Heart right ventricle (tissue), 16 donors: ENCODE measurements at regions of chr6 and their contacts with region 1.

Region 1: GRCh38 chr6:3281631-3282475 is 23.1 kb downstream of the PSMG4 start:
- DNase-seq: peak in 1 of 2 donors; percentile 29
- ATAC-seq: peak in 6 of 8 donors; percentile 17 to 50 (median 38)
- H3K4me3 ChIP-seq: no peak overlapping the region
- H3K27ac ChIP-seq: peak overlapping the region in 8 of 10 donors; percentile 6 to 68 (median 45)
- H3K4me1 ChIP-seq: peaks cover 7 to 31% (median 21%) of the 10 kb centered on the region in 9 donors
- H3K27me3 ChIP-seq: no peaks in the 10 kb centered on the region
- CTCF ChIP-seq: no peak

Region 2: DNA sequence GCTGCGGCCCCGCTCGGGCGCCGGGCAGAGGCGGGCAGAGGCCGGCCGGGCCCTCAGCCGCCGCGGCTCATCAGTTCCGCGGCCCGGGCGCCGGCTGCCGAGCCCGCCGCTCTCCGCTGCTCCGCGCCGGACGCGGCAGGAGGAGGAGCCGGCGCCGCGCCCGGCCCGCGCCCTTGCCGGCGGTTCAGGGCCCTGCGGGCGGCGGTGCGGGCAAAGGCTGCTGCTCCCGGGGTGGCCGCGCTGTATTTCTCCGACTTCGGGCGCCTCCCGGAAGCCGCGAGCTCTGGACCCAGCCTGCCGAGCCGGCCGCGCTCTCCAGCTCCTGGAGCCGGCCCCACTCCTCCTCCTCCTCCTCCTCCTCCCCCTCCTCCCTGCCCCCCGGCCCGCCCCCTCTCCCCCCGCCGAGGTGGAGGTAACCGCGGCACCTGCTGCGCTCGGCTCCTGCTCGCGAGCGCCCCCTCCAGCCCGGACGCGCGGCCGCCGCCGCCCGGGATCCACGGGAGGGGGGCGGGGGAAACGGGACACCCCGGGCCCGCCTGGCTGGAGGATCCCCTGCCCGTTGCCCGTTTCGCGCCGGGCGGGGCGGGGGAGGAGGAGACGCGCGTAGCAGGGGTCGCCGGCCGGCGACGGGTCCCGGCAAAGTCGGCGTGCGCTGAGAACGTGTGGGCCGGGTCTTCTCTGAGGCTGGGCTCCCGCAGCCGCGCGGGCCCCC is 175.1 kb after region 1 on chr6 and contains the start of gene SLC22A23:
- intact Hi-C with region 1: loop called in 6 of 10 experiments (anchors 5 to 10 kb)
- DNase-seq: peak; percentile 53 to 76
- ATAC-seq: peak; percentile 77 to 90 (median 80)
- H3K4me3 ChIP-seq: peak within 1 kb of the TSS; percentile 23 to 72 (median 68)
- H3K27ac ChIP-seq: peak within 1 kb of the TSS; percentile 25 to 67 (median 49)
- H3K4me1 ChIP-seq: peaks cover 11 to 43% (median 25%) of the 10 kb centered on the region in 9 donors
- H3K27me3 ChIP-seq: peaks cover 0 to 87% (median 14%) of the 10 kb centered on the region in 7 donors
- CTCF ChIP-seq: peak; percentile 62 to 81 (median 77)
- total RNA-seq, gene SLC22A23: 4.4 to 7.8 (median 5.5) TPM

Region 3: DNA sequence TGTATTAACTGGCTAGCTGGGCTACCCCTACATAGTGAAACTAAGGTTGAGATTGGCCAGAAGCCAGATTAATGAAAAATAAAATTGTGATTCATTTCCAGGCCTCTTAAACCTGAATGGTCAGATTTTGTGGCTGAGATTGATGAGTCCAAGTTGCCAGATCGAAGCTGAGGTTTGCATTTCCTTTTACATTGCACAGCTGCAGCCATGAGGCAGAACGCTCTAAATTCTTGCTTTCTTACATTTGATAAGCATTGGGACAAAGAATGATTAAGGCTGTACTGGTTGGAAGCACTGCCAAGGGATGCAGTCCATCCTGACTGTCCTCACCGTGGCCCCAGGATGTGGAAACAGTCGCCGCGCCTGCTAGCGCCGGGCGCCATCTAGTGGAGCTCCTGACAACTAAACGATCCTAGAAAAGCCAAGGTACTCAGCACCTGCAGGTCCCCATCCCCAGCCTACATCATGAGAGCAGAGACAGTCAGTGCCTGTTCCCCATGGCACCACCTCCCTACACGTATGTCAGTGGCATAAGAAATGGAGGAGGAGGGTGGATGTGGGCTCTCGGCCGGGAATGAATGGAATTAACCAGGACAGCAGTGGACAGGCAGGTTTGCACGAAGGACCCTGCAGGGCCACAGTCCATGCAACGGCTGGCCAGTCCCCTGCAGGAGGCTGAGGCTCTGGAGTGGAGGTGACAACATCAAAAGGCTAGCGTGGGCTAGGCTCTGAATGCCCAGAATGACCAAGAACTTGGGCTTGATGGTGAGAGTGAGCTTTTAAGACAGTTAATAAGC is 450.7 kb after region 1 on chr6:
- intact Hi-C with region 1: loop called (anchors 1 to 5 kb)
- DNase-seq: peak; percentile 67 to 72
- ATAC-seq: peak; percentile 65 to 84 (median 73)
- H3K4me3 ChIP-seq: no peak overlapping the region
- H3K27ac ChIP-seq: peak overlapping the region in 1 of 10 donors; percentile 6
- H3K4me1 ChIP-seq: peaks cover 0 to 33% (median 13%) of the 10 kb centered on the region in 9 donors
- H3K27me3 ChIP-seq: no peaks in the 10 kb centered on the region
- CTCF ChIP-seq: peak; percentile 76 to 94 (median 87)

Region 4: DNA sequence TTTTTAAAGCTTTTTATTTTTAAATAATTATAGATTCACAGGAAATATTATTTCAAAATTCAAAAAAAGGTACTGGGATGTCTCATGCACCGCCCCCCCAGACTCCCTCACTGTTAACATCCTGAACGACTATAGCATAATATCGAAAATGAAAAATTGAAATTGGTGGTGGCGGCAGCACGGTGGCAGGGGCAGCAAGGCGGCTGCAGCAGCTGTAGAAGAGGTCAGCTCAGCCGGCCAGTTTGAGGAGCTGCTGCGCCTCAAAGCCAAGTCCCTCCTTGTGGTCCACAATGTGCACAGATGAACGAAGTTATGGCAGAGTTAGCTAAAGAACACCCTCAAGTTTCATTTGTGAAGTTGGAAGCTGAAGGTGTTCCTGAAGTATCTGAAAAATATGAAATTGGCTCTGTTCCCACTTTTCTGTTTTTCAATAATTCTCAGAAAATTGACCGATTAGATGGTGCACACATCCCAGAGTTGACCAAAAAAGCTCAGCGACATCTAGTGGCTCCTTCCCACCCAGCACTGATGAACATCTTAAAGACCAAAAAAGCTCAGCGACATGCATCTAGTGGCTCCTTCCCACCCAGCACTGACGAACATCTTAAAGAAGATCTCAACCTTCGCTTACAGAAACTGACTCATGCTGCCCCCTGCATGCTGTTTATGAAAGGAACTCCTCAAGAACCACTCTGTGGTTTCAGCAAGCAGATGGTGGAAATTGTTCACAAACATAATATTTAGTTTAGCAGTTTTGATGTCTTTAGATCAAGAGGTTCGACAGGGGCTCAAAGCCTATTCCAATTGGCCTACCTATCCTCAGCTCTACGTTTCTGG is 696.2 kb after region 1 on chr6:
- intact Hi-C with region 1: loop called in 3 of 10 experiments (anchors 10 kb)
- DNase-seq: peak in 1 of 2 donors; percentile 24
- ATAC-seq: peak; percentile 75 to 92 (median 86)
- H3K4me3 ChIP-seq: no peak overlapping the region
- H3K27ac ChIP-seq: no peak overlapping the region
- H3K4me1 ChIP-seq: peaks cover 0 to 5% (median 0%) of the 10 kb centered on the region in 9 donors
- H3K27me3 ChIP-seq: no peaks in the 10 kb centered on the region
- CTCF ChIP-seq: peak; percentile 22 to 73 (median 64)

Region 5: DNA sequence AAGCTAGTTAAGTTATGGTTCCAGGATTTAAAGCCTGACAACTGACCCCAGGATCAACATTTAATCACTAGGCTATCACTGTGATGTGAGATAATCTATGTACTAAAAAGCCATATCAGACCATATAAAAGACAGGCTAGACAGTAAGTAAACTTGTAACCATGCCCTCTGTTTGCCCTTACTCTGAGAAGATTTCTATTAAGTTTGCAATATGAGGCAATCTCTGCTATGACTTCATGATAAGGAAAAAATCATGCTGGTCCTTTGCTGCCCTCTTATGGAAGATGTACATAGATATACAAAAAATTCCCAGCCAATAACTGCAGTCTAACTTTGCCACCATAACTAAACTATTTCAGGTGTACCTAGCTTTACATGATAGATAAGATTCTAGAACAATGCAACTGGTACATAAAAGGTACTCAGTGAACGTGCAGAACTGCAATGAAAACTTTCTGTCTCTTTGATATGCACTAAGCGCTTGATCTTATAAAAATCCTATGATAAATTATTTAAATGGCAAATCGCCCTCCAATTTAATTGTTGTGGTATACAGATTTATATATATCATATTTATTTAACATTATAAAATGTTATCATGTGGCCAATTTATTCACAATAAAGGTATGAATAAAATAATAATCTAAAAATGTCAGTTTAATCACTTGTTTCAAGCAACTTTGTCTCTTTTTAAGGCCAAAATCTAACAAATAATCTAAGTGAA is 726.6 kb after region 1 on chr6:
- intact Hi-C with region 1: loop called in 1 of 10 experiments (anchors 10 kb)
- DNase-seq: no peak
- ATAC-seq: peak in 5 of 8 donors; percentile 42 to 76 (median 44)
- H3K4me3 ChIP-seq: no peak overlapping the region
- H3K27ac ChIP-seq: peak overlapping the region in 1 of 10 donors; percentile 28
- H3K4me1 ChIP-seq: peaks cover 0 to 33% (median 15%) of the 10 kb centered on the region in 9 donors
- H3K27me3 ChIP-seq: no peaks in the 10 kb centered on the region
- CTCF ChIP-seq: peak in 8 of 9 donors; percentile 24 to 60 (median 53)